ENCODE measurements at regions of chr12 and their contacts with region 1.

Region 1: DNA sequence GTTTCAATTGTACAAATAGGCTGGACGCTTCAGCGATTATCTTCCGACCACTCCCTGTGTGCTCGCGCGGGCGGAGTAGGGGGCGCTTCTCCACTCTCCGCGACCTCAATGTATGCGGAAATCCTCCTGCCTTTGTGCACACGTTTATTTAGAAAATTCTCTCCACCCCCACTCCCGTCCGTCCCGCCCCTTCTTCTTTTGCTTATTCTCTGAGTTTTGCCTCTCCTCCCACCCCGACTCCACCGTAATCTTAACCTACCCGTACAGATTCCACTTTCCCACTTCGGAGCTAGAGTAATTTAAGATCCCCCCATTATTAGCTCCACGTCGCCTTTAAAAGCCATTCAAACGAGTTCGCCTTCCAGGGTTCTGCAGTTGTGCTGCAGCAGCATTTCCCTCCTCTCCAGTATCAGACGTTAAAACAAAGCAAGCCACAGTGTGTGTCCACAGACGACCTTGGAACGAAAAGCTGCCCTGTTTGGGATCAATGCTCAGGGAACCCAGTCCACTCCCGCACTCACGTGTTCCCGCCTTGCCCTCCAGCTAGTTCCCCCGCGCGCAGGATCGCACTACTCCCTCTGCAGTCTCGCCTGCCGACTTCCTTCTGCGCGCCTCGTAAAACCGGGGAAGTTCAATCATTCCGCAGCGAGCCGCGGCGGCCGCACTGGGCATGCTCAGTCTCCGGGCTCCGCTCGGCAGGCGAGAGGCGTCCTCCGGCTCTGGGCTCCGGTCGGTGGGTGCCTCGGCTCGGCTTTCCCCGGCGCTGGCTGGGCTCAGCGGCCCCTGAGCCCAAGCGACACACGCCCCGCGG is at the start of gene ANO6:
- DNase-seq: peak; percentile 85
- ATAC-seq: peak; percentile 92
- H3K4me3 ChIP-seq: peak within 1 kb of the TSS; percentile 84 to 95 (median 89)
- H3K27ac ChIP-seq: peak within 1 kb of the TSS; percentile 95
- H3K4me1 ChIP-seq: peaks cover 40% of the 10 kb centered on the region
- H3K27me3 ChIP-seq: no peaks in the 10 kb centered on the region; a peak in 1 of 5 replicates
- CTCF ChIP-seq: peak; percentile 72
- EP300 ChIP-seq: peak; percentile 10 to 23; a peak in 2 of 4 replicates
- POLR2A ChIP-seq: peak; percentile 84 to 87
- RAD21 ChIP-seq: peak; percentile 51
- total RNA-seq, gene ANO6: 45.8 and 57.1 TPM in 2 replicates

Region 2: GRCh38 chr12:45170456-45171042 is 45.1 kb before region 1 on chr12:
- CTCF ChIA-PET with region 1: interaction called, 8 read pairs
- POLR2A ChIA-PET with region 1: no interaction called
- in situ Hi-C with region 1: no loop called
- intact Hi-C with region 1: loop called (anchors 1 kb)
- DNase-seq: peak; percentile 62
- ATAC-seq: peak; percentile 90
- H3K4me3 ChIP-seq: no peak overlapping the region
- H3K27ac ChIP-seq: no peak overlapping the region
- H3K4me1 ChIP-seq: no peaks in the 10 kb centered on the region
- H3K27me3 ChIP-seq: no peaks in the 10 kb centered on the region
- CTCF ChIP-seq: peak; percentile 86
- EP300 ChIP-seq: no peak
- POLR2A ChIP-seq: no peak
- RAD21 ChIP-seq: peak; percentile 64; the same call in 1 of the 2 replicates

Region 3: DNA sequence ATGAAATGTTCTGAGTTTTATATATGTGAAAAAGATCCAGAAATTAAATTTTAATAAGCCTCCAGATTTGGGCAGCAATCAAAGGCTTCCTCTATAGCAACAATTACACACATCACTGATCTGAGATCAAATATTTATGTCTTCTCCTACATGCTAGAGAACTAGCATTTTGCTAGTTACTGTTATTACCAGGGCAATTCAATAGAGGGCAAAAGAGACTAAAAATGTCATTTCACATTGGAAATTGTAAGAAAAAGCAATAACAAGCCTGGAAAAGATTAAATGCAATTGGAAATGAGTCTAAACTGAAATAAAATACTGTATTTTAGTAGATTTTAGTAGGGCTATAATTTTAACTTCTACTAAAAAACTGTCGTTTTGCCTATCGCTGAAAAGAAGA is 32.4 kb before region 1 on chr12:
- CTCF ChIA-PET with region 1: no interaction called
- POLR2A ChIA-PET with region 1: interaction called, 3 read pairs
- in situ Hi-C with region 1: no loop called
- intact Hi-C with region 1: loop called (anchors 1 kb)
- DNase-seq: peak; percentile 13
- ATAC-seq: no peak
- H3K4me3 ChIP-seq: no peak overlapping the region
- H3K27ac ChIP-seq: no peak overlapping the region
- H3K4me1 ChIP-seq: peaks cover under 1% of the 10 kb centered on the region; the same call in 1 of the 2 replicates
- H3K27me3 ChIP-seq: no peaks in the 10 kb centered on the region
- CTCF ChIP-seq: peak; percentile 51
- EP300 ChIP-seq: no peak
- POLR2A ChIP-seq: no peak
- RAD21 ChIP-seq: no peak

Region 4: GRCh38 chr12:45234139-45234846 is 18.7 kb after region 1 on chr12:
- CTCF ChIA-PET with region 1: no interaction called
- POLR2A ChIA-PET with region 1: interaction called, 9 read pairs
- in situ Hi-C with region 1: no loop called
- intact Hi-C with region 1: loop called (anchors 1 kb)
- DNase-seq: peak; percentile 92
- ATAC-seq: peak; percentile 88
- H3K4me3 ChIP-seq: peak overlapping the region in 2 of 3 experiments; percentile 20 to 21; a peak in 2 of 6 replicates
- H3K27ac ChIP-seq: peak overlapping the region; percentile 67
- H3K4me1 ChIP-seq: peaks cover 56% of the 10 kb centered on the region
- H3K27me3 ChIP-seq: no peaks in the 10 kb centered on the region
- CTCF ChIP-seq: no peak
- EP300 ChIP-seq: peak in 1 of 2 experiments; percentile 53; a peak in 1 of 4 replicates
- POLR2A ChIP-seq: no peak
- RAD21 ChIP-seq: no peak

Region 5: DNA sequence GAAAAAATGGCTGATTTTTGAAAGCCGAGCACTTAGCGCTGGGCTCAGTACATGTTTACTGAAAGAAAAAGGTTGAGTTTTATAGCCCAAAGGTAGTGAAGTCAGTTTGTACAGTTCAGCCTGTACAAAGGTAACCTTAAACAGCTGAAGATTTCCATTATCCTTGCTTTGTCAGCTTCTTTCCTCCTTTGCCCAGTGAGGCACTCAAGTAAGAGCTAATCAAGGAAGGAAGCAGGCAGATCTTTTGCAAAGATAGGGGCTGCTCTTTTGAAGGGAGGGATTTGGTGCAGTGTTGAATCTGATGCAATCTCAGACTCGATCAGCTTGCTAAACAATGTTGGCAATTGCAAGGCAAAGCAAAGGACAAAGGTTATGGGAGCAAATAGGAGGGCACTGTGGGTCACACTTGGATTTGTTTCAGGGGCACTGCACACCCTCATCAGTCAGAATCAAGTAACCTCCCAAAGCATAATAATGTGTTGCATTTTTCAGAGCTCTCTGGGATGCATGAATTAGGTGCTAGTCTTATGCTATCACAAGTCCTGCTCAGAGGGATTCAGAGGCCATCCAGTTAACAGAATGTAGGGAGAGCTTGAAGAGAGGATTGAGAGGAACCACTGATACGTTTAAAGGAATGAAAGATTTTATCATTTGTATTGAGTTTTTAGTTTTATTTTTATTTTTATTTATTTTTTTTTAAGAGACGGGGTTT is 44.6 kb after region 1 on chr12:
- CTCF ChIA-PET with region 1: no interaction called
- POLR2A ChIA-PET with region 1: interaction called, 13 read pairs
- in situ Hi-C with region 1: no loop called
- intact Hi-C with region 1: loop called (anchors 5 kb)
- DNase-seq: peak; percentile 91
- ATAC-seq: peak; percentile 94
- H3K4me3 ChIP-seq: peak overlapping the region; percentile 26 to 50 (median 40); a peak in 3 of 6 replicates
- H3K27ac ChIP-seq: peak overlapping the region; percentile 82
- H3K4me1 ChIP-seq: peaks cover 66% of the 10 kb centered on the region
- H3K27me3 ChIP-seq: no peaks in the 10 kb centered on the region
- CTCF ChIP-seq: peak; percentile 26; the same call in 1 of the 2 replicates
- EP300 ChIP-seq: peak in 1 of 2 experiments; percentile 88; a peak in 2 of 4 replicates
- POLR2A ChIP-seq: no peak
- RAD21 ChIP-seq: no peak

Region 6: DNA sequence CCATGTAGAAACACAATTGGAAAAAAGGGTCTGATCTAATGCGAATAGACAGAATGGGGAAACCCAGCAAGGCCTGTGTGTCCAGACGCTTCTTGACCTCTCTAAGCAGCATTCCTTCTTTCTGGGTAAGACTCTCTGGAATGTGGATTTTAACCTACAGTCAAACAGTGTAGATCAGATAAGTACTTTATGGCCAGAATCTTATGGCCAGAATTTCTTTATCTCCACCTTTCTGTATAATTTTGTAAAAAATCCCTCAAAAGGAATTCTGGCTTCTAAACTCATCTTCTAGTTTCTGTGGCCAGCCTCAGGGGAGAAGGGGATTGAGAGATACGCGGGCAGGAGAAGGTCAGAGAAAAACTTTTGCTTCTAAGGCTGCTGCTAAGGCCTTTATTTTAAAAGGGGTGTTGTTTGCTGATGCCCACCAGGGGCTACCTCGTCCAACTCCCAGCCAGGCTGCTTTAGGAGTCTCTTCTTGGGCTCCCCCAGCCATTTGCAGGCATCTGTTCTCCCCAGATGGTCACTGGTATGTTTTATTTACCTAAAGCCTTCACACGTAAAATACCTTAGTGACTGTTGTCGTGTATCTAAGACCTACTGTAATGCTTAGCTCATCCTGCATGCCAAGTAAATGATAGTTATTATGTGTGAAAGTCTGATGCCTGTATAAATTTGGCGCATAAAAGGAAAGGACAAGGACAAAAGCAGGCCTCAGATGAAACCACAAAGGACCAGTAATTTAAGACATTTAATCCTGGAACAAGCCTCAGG is 68.7 kb after region 1 on chr12:
- CTCF ChIA-PET with region 1: no interaction called
- POLR2A ChIA-PET with region 1: no interaction called
- in situ Hi-C with region 1: no loop called
- intact Hi-C with region 1: loop called (anchors 5 kb)
- DNase-seq: peak; percentile 31
- ATAC-seq: peak; percentile 48; the same call in 2 of the 3 replicates
- H3K4me3 ChIP-seq: no peak overlapping the region
- H3K27ac ChIP-seq: no peak overlapping the region
- H3K4me1 ChIP-seq: peaks cover 36% of the 10 kb centered on the region
- H3K27me3 ChIP-seq: no peaks in the 10 kb centered on the region
- CTCF ChIP-seq: no peak
- EP300 ChIP-seq: no peak
- POLR2A ChIP-seq: no peak
- RAD21 ChIP-seq: no peak

Region 7: GRCh38 chr12:45388545-45388944 is 172.9 kb after region 1 on chr12:
- CTCF ChIA-PET with region 1: no interaction called
- POLR2A ChIA-PET with region 1: no interaction called
- in situ Hi-C with region 1: no loop called
- intact Hi-C with region 1: loop called (anchors 1 kb)
- DNase-seq: peak; percentile 29
- ATAC-seq: peak; percentile 69; the same call in 2 of the 3 replicates
- H3K4me3 ChIP-seq: no peak overlapping the region
- H3K27ac ChIP-seq: no peak overlapping the region
- H3K4me1 ChIP-seq: no peaks in the 10 kb centered on the region
- H3K27me3 ChIP-seq: no peaks in the 10 kb centered on the region
- CTCF ChIP-seq: peak; percentile 63
- EP300 ChIP-seq: no peak
- POLR2A ChIP-seq: no peak
- RAD21 ChIP-seq: peak; percentile 30; the same call in 1 of the 2 replicates

Region 8: GRCh38 chr12:45634273-45634917 is 418.8 kb after region 1 on chr12:
- CTCF ChIA-PET with region 1: no interaction called
- POLR2A ChIA-PET with region 1: no interaction called
- in situ Hi-C with region 1: no loop called
- intact Hi-C with region 1: no loop called
- DNase-seq: no peak
- ATAC-seq: no peak
- H3K4me3 ChIP-seq: no peak overlapping the region
- H3K27ac ChIP-seq: no peak overlapping the region
- H3K4me1 ChIP-seq: no peaks in the 10 kb centered on the region
- H3K27me3 ChIP-seq: no peaks in the 10 kb centered on the region; a peak in 2 of 5 replicates
- CTCF ChIP-seq: no peak
- EP300 ChIP-seq: no peak
- POLR2A ChIP-seq: no peak
- RAD21 ChIP-seq: no peak